ENCODE measurements at regions of chr19 and their contacts with region 1.

Region 1: GRCh38 chr19:58572818-58573657 is at the start of gene MZF1:
- DNase-seq: peak; percentile 99
- ATAC-seq: peak; percentile 63
- H3K4me3 Mint-ChIP-seq: peak within 1 kb of the TSS; percentile 98
- H3K27ac Mint-ChIP-seq: peak within 1 kb of the TSS; percentile 100
- H3K4me1 Mint-ChIP-seq: peaks cover 34% of the 10 kb centered on the region
- H3K27me3 Mint-ChIP-seq: no peaks in the 10 kb centered on the region
- total RNA-seq, gene MZF1: 31.3 to 31.7 TPM

Region 2: GRCh38 chr19:58513694-58514563 is 59.1 kb before region 1 on chr19:
- POLR2A ChIA-PET with region 1: interaction called, 37 read pairs
- DNase-seq: peak; percentile 99
- ATAC-seq: peak; percentile 90
- H3K4me3 Mint-ChIP-seq: peak overlapping the region; percentile 90
- H3K27ac Mint-ChIP-seq: peak overlapping the region; percentile 93
- H3K4me1 Mint-ChIP-seq: peaks cover 27% of the 10 kb centered on the region
- H3K27me3 Mint-ChIP-seq: no peaks in the 10 kb centered on the region

Region 3: DNA sequence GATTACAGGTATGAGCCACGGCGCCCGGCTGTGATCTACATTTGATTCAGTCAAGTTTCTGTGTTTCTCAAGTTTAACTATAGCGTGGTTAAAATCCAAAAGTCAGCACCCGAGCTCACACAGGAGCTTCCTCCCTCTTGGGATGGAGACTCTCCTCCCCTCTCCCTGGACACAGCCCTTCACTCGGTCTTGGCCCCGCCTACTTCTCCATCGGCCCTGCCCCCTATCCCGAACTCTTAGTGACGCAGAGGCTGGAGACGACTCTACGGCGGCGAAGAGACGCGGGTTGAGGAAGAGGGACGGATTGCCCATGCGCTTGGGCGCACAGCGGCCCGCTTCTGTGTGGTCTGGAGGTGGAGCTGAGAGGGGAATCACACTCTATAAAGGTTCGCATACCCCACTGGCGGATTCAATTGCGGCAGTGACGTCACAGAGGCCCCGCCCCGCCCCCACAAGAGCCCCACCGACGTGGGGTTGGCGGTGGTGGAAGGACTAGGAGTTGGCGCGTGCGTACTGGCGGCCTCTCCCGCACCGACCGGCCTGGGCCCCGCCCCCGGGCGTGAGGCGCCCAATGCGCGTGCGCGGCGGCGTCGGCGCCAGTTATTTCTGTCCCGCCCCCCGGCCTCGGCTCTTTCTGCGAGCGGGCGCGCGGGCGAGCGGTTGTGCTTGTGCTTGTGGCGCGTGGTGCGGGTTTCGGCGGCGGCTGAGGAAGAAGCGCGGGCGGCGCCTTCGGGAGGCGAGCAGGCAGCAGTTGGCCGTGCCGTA is 29.0 kb before region 1 on chr19 and contains the start of gene TRIM28:
- POLR2A ChIA-PET with region 1: interaction called, 15 read pairs
- DNase-seq: peak; percentile 100
- ATAC-seq: peak; percentile 96
- H3K4me3 Mint-ChIP-seq: peak within 1 kb of the TSS; percentile 98
- H3K27ac Mint-ChIP-seq: peak within 1 kb of the TSS; percentile 98
- H3K4me1 Mint-ChIP-seq: peaks cover 28% of the 10 kb centered on the region
- H3K27me3 Mint-ChIP-seq: peaks cover 20% of the 10 kb centered on the region
- total RNA-seq, gene TRIM28: 409 to 412 TPM

Region 4: DNA sequence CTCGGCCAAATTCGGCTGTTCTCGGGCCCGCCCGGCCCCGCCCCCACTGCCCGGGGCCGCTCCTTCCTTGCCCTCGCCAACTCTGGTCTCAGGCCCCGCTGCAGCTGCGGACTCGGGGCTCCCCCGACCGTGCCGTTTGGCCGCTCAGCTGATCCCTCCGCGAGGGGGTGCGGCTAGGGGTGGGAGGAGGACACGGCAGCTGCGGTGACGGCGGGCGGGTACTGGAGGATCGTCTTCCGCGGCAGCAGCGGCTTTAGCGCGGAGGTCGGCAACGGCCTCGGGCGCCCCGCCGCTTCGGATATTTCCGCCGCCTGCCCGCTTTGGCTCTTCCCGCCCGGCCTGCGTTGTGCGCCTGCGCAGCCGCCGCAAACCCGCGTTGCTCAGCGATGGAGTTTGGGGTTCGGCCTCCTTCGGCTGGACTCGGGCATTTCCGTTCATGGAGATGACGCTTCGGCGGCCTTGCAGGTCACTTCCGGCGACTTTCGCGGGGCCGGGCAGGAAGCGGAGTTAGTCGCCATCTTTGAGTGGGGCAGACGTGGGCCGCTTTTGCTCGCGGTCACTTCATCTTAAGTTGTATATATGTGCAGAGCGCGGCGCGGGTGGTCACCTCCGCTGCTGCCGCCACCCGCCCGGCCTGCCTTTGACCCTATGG is 14.3 kb before region 1 on chr19:
- POLR2A ChIA-PET with region 1: interaction called, 50 read pairs
- DNase-seq: peak; percentile 100
- ATAC-seq: peak; percentile 65
- H3K4me3 Mint-ChIP-seq: peak overlapping the region; percentile 96
- H3K27ac Mint-ChIP-seq: peak overlapping the region; percentile 96
- H3K4me1 Mint-ChIP-seq: peaks cover 41% of the 10 kb centered on the region
- H3K27me3 Mint-ChIP-seq: no peaks in the 10 kb centered on the region

Measured in activated naive CD8-positive, alpha-beta T cell treated with anti-CD3 and anti-CD28 coated beads, Interleukin-2, amount 10 ng/mL, durations not matched to agents 7 days and 5 days (primary cell).